Activated CD4-positive, alpha-beta T cell treated with anti-CD3 and anti-CD28 coated beads, Interleukin-2, amount 10 ng/mL, durations not matched to agents 7 days and 5 days (primary cell): ENCODE measurements at regions of chr17 and their contacts with region 1.

Region 1: GRCh38 chr17:37373530-37374159 is 2.1 kb upstream of the C17orf78 start:
- DNase-seq: peak; percentile 80
- H3K4me3 Mint-ChIP-seq: no peak overlapping the region
- H3K27ac Mint-ChIP-seq: no peak overlapping the region
- H3K4me1 Mint-ChIP-seq: peaks cover 7% of the 10 kb centered on the region
- H3K27me3 Mint-ChIP-seq: no peaks in the 10 kb centered on the region

Region 2: GRCh38 chr17:36601303-36602029 is 772.2 kb before region 1 on chr17 and contains the start of gene MRM1:
- CTCF ChIA-PET with region 1: interaction called, 14 read pairs
- POLR2A ChIA-PET with region 1: no interaction called
- DNase-seq: peak; percentile 91
- H3K4me3 Mint-ChIP-seq: peak within 1 kb of the TSS; percentile 79
- H3K27ac Mint-ChIP-seq: peak within 1 kb of the TSS; percentile 94
- H3K4me1 Mint-ChIP-seq: peaks cover 42% of the 10 kb centered on the region
- H3K27me3 Mint-ChIP-seq: no peaks in the 10 kb centered on the region
- total RNA-seq, gene MRM1: 6.8 to 8.6 TPM

Region 3: GRCh38 chr17:37327341-37328090 is 46.1 kb before region 1 on chr17:
- CTCF ChIA-PET with region 1: no interaction called
- POLR2A ChIA-PET with region 1: no interaction called
- DNase-seq: no peak
- H3K4me3 Mint-ChIP-seq: no peak overlapping the region
- H3K27ac Mint-ChIP-seq: no peak overlapping the region
- H3K4me1 Mint-ChIP-seq: no peaks in the 10 kb centered on the region
- H3K27me3 Mint-ChIP-seq: no peaks in the 10 kb centered on the region

Region 4: DNA sequence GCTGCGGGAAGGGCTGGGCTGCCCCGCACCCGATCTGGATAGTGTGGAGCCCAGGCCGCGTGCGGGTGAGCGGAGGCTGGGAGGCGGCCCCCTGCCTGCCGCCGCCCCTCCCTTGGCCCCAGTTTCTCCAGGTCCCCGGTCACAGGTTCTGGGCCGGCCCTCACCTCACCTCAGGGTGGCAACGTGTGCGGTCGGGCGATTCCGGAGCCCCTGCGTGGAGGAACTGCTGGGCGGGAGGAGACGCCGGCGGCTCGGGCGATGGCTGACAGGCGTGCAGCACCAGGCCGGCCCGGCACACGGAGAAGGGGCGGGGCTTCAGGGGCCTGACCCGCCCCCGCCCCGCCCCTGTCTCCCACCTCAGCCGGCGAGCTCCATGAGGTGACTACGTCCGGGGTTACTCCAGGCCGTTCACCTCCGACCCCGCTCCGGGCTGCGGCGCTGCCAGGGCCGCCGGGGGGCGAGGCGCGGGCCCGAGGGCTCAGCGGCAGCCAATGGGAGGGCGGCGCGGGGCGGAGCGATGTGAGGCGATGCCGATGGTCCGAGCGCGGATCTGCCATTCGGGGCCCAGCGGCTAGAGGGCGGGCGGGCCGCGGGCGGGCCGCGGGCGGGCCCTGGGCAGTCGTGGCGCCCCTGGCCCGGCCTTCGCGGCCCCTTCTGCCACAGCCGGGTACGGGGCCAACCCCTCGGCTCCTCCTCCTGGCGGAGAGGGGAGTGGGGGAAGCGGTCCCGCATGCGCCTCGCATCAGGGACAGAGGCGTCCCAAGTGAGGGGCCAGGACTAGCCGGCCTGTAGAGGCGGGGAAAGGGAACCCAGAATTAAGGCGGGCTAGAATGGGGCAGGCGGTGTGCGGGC is 14.6 kb before region 1 on chr17:
- CTCF ChIA-PET with region 1: interaction called, 13 read pairs
- POLR2A ChIA-PET with region 1: no interaction called
- DNase-seq: peak; percentile 89
- H3K4me3 Mint-ChIP-seq: peak overlapping the region; percentile 88
- H3K27ac Mint-ChIP-seq: peak overlapping the region; percentile 89
- H3K4me1 Mint-ChIP-seq: peaks cover 25% of the 10 kb centered on the region
- H3K27me3 Mint-ChIP-seq: no peaks in the 10 kb centered on the region

Region 5: DNA sequence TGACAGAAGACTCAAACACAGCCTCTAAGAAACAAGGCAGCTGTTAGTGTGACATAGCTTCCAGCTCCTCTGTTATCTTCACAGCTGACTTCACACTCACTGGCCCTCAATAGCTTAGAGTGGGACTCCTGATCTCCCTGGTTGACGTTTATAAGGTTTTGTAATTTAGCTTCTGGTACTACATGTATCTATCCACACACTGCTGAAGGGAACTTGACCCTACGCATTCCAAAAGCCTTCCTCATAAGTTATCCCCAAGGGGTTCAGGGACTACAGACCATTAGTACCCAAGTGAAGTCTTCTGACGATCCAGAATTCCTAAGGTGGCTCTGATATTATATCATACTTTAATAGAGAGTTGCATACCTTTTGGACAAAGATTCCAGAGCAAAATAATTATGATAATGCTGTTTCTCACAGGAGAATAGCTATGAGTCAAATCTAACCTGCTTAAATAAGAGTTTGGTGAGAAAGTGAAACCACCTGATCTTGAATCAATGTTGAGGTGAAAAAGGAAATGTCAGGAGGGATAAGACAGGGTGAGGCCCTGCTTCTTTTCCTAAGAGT is 18.5 kb after region 1 on chr17:
- CTCF ChIA-PET with region 1: interaction called, 13 read pairs
- POLR2A ChIA-PET with region 1: no interaction called
- DNase-seq: no peak
- H3K4me3 Mint-ChIP-seq: no peak overlapping the region
- H3K27ac Mint-ChIP-seq: no peak overlapping the region
- H3K4me1 Mint-ChIP-seq: peaks cover 23% of the 10 kb centered on the region
- H3K27me3 Mint-ChIP-seq: no peaks in the 10 kb centered on the region